Activated naive CD4-positive, alpha-beta T cell treated with anti-CD3 and anti-CD28 coated beads, Interleukin-2, amount 10 ng/mL, durations not matched to agents 7 days and 5 days (primary cell): ENCODE measurements at regions of chr10 and their contacts with region 1.

Region 1: DNA sequence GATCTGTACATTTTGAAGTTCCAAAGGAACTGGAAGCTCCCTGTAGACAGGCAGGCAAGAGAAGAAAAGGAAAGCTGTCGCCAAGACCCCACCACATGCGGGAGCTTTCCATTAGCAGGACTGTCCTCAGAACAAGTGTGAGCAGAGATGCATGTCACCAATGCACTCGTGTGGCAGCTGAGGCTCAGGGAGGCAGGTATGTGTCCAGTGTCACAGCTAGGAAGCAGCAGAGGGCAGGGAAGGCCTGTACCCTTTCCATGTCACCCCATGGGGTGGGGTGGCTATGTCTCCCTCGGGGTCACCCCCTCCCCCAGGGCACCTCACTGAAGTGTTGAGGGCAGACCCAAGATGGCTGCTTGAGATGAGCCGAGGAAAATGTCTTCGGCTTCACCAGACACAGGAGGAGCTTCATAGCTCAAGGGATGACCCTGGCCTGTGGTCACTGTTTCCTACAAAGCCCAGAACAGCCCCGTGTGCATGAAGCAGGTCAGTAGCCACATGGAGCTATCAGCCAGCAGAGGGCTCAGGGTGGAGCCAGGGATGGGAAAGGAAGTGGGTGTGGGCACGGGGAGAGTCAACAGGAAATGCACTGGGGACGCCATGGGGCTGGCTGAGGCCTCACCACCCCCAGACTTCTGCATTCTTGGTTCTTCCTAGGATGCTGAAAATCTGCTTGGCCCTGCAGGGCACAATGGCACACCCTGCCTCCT is 96.6 kb downstream of the FAM53B start:
- DNase-seq: peak; percentile 88
- H3K4me3 Mint-ChIP-seq: peak overlapping the region; percentile 70
- H3K27ac Mint-ChIP-seq: peak overlapping the region; percentile 99
- H3K4me1 Mint-ChIP-seq: peaks cover 90% of the 10 kb centered on the region
- H3K27me3 Mint-ChIP-seq: no peaks in the 10 kb centered on the region

Region 2: GRCh38 chr10:124418726-124419501 is 228.7 kb before region 1 on chr10 and contains the start of gene OAT:
- CTCF ChIA-PET with region 1: no interaction called
- DNase-seq: peak; percentile 98
- H3K4me3 Mint-ChIP-seq: peak within 1 kb of the TSS; percentile 79
- H3K27ac Mint-ChIP-seq: peak within 1 kb of the TSS; percentile 81
- H3K4me1 Mint-ChIP-seq: peaks cover 17% of the 10 kb centered on the region
- H3K27me3 Mint-ChIP-seq: peaks cover 41% of the 10 kb centered on the region

Region 3: GRCh38 chr10:124688889-124689670 is 41.5 kb after region 1 on chr10:
- CTCF ChIA-PET with region 1: interaction called, 19 read pairs
- DNase-seq: peak; percentile 48
- H3K4me3 Mint-ChIP-seq: no peak overlapping the region
- H3K27ac Mint-ChIP-seq: peak overlapping the region; percentile 84
- H3K4me1 Mint-ChIP-seq: peaks cover 78% of the 10 kb centered on the region
- H3K27me3 Mint-ChIP-seq: no peaks in the 10 kb centered on the region

Region 4: GRCh38 chr10:124697830-124698544 is 50.4 kb after region 1 on chr10:
- CTCF ChIA-PET with region 1: interaction called, 13 read pairs
- DNase-seq: peak; percentile 62
- H3K4me3 Mint-ChIP-seq: no peak overlapping the region
- H3K27ac Mint-ChIP-seq: peak overlapping the region; percentile 96
- H3K4me1 Mint-ChIP-seq: peaks cover 100% of the 10 kb centered on the region
- H3K27me3 Mint-ChIP-seq: no peaks in the 10 kb centered on the region

Region 5: GRCh38 chr10:124727365-124727960 is 79.9 kb after region 1 on chr10:
- CTCF ChIA-PET with region 1: no interaction called
- DNase-seq: no peak
- H3K4me3 Mint-ChIP-seq: no peak overlapping the region
- H3K27ac Mint-ChIP-seq: peak overlapping the region; percentile 7
- H3K4me1 Mint-ChIP-seq: peaks cover 84% of the 10 kb centered on the region
- H3K27me3 Mint-ChIP-seq: no peaks in the 10 kb centered on the region